GM13976 (cell line): ENCODE measurements at regions of chr11 and their contacts with region 1.

Region 1: DNA sequence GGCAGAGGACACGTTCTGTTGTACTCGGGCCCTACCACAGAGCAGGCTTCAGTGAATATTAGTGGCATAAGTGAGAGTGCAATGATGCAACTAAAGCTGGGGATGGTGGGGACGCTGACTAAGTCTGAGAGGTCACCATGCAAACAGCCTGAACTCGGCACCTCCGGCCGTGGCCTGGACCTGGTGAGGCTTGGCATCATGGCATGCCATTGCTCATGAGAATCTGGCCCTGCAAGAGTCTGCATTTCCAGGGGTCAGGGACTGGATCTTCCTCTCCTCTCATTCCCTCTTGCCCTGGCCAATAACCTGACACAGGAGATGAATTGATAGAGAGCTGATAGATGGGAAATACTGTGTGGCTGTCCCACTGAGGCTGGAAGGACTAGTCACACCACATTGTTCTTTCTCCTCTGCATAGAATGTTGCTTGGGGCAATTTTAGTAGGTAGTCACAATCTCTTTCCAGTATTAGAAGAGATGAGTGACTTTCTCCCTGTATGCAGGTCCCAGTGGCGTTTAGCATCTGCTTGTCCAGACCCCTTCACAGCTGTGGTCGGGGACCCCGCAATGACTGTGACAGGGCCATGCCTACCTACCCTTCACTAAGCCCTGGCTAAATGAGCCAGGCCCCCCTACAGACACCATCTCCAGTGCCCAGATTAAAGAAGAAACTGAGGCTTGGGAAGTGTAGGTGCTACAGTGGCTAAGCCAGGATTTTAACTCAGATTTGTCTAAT is 24.1 kb upstream of the P2RY2 start:
- DNase-seq: no peak
- CTCF ChIP-seq: no peak

Region 2: DNA sequence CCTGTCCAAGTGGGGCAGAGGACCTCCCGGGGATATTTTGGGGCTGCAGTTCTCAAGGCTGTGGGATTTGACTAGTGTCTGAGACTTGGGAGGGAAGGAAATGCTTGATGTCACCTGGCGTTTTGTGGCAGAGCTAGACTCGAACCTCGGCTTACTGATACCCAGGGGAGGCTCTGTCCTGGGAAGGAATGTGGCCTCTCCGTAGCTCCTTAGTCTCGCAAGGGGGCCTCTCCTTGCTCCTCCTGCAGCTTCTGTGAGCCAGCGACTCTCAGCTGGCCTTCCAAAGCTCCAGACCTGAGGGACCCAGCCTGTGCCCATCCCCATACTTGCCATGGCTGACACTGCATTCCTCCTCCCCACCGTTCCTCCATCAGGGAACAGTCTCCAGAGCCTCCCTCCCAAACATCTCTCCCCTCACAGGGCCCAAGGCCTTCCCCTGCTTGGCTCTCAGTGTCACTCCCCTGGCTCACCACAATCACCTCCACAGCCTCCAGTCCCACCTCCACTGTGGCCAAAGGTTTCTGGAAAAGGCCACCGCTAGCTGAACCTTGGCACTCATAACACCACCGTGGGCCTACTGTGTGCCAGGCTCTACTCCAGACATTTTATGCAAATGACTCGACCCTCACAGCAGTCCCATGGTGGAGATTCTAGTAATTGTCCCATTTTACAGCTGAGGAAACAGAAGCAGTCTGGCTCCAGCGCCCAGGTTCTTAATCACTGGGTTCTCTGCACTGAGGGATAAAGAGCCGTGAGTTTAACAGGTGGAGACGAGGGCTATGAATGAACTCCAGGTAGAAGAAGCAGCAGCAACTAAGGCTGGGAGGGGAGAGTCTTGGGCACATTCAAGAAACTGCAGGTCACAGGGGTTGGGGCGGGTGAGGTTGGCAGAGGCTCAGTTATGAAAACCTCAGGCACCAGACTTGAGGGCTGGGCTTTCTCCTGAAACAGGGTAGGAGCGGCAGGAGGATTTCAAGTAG is 36.2 kb after region 1 on chr11:
- in situ Hi-C with region 1: loop called (anchors 5 kb)
- DNase-seq: no peak
- CTCF ChIP-seq: no peak

Region 3: DNA sequence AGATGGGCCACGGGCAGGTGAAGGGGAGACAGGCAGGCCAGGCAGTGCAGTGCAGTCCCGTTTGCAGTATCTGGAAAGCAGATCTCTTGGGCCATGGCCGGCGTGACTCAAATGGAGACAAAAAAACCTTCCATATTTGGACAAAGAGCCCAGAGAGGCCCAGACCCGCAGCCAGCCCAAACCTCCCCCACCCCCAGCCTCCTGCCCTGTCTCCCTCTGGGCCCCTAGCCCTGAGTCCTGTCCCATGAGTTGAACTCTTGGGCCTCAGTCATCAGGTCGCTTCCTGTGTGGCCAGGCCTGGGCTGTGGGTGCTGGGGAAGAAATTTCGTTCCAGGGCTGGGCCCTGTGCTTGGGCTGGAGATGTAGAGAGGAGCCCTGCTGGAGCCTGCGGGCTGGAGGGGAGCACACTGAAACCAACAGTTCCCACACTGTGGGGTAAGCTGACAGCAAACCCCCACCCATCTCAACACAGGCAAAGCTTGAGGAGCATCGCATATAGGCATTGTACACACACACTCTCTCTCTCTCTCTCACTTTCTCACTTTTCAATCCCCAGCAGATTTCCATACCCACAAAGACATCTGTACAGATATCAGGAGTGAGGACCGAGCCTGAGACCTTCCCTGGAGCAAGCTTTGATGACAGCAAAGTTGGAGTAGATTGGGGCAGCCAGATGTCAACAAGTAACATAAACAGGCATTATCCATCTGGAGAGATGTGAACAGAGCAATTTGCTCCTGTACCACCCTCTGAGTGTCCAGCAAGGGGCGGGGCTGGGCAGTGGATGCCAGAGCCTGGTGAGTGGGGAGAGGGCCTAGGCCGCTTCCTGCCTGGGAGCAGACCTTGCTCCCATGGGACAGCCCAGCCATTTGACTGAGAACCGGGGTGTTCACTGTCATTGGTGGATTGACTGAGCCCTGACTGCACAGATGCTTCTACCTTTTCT is 131.4 kb after region 1 on chr11:
- in situ Hi-C with region 1: no loop called
- DNase-seq: peak; percentile 90
- CTCF ChIP-seq: no peak

Region 4: DNA sequence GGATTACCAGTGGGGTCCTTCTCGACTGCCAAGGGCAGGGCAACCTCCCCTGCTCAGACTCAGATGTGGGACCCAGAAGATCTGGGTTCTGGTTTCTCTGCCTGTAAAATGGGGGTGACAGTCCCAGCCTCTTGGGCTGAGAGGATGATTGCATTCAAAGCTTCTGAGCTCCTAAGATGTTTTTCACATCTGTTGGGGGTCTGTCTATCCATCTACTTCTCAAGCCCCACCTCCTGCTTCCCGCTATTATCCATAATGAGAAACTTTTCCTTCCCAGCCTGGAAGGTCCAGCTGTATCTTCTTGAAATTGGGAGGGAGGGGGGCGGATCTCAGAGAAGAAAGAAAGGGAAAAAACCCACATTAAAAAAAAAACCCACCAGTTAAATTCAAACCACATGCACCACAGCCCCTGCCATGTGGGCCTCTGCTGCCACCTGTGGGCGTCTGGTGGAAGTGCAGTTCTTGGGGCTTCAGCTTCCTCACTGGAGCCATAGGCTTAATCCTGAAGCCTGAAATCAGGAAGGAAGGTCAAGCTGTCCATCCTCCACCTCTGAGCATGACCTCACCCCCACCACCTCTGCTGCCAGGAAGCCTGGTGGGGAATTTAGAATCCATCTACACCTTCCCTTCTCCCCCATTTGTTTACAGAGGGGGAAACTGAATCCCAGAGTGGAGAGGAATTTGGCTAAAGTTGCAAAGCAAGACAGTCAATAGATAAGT is 141.4 kb after region 1 on chr11:
- in situ Hi-C with region 1: no loop called
- DNase-seq: peak; percentile 84
- CTCF ChIP-seq: peak; percentile 94